GM23248 (cell line): ENCODE measurements at regions of chr6 and their contacts with region 1.

Region 1: GRCh38 chr6:34176261-34177031 is 30.6 kb upstream of the GRM4 start:
- DNase-seq: no peak
- H3K4me3 ChIP-seq: no peak overlapping the region
- H3K27ac ChIP-seq: no peak overlapping the region
- H3K4me1 ChIP-seq: no peaks in the 10 kb centered on the region
- H3K27me3 ChIP-seq: no peaks in the 10 kb centered on the region

Region 2: DNA sequence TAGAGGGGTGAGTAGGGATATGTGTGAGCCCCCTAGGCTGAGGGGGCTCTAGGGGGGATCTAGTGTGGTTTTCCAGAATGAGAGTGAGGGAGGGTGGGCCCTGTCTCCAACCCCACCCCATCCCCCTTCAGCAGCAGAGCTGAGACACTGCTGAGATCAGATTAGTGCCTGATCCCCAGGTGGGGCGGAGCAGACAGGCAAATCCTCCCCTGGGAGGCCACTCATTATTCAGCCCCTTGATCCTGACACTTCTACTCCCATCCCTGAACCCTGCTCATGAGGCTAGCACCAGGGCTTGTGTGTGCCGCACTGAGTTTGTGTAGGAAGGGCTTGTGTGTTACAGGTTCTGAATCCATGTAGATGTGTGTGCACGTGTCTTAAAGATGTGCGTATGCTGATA is 337.2 kb after region 1 on chr6:
- in situ Hi-C with region 1: no loop called
- DNase-seq: no peak
- H3K4me3 ChIP-seq: no peak overlapping the region
- H3K27ac ChIP-seq: no peak overlapping the region
- H3K4me1 ChIP-seq: no peaks in the 10 kb centered on the region
- H3K27me3 ChIP-seq: peaks cover 5% of the 10 kb centered on the region

Region 3: GRCh38 chr6:34602318-34603111 is 426.1 kb after region 1 on chr6:
- in situ Hi-C with region 1: loop called (anchors 10 kb)
- DNase-seq: no peak
- H3K4me3 ChIP-seq: no peak overlapping the region
- H3K27ac ChIP-seq: no peak overlapping the region
- H3K4me1 ChIP-seq: no peaks in the 10 kb centered on the region
- H3K27me3 ChIP-seq: no peaks in the 10 kb centered on the region

Region 4: GRCh38 chr6:34630040-34630439 is 453.6 kb after region 1 on chr6:
- in situ Hi-C with region 1: no loop called
- DNase-seq: peak; percentile 92
- H3K4me3 ChIP-seq: 0 out of 2 replicates have a peak overlapping the region, but pooled peaks have one; percentile 12
- H3K27ac ChIP-seq: peak overlapping the region; percentile 87
- H3K4me1 ChIP-seq: peaks cover 14% of the 10 kb centered on the region
- H3K27me3 ChIP-seq: no peaks in the 10 kb centered on the region